ENCODE measurements at regions of chr1 and their contacts with region 1.

Region 1: DNA sequence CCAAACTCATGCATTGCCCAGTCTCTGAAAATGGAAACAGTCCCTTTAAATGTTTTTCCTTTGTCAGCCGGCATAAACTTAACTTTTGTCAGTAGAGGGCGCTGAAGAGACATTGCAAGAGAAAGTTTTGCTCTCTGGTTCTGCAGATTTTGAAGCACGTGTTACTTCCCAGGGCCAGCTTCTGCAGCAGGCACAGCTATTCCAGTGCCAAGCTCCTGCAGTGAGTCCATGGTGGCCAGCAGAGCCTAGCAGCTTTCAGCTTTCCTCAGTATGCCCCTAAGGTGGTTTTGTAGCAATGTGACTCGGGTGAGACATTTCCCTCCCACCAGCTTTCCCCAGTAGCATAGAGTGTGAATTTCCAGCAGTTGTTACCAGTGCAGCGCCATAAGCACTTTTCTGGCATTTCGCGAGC is 2.6 kb upstream of the IFI44L start:
- DNase-seq: peak; percentile 60
- ATAC-seq: peak; percentile 54
- H3K4me3 ChIP-seq: no peak overlapping the region
- H3K27ac ChIP-seq: peak overlapping the region; percentile 61; the same call in 1 of the 2 replicates
- H3K4me1 ChIP-seq: peaks cover 20% of the 10 kb centered on the region
- H3K27me3 ChIP-seq: no peaks in the 10 kb centered on the region
- CTCF ChIP-seq: peak; percentile 81 to 95 (median 87); a peak in 5 of 6 replicates
- EP300 ChIP-seq: no peak
- POLR2A ChIP-seq: no peak
- RAD21 ChIP-seq: peak; percentile 95

Region 2: GRCh38 chr1:78004719-78005447 is 612.7 kb before region 1 on chr1 and contains the start of gene DNAJB4:
- CTCF ChIA-PET with region 1: interaction called, 8 read pairs
- POLR2A ChIA-PET with region 1: interaction called, 15 read pairs
- RAD21 ChIA-PET with region 1: interaction called, 16 read pairs
- SMC1A ChIA-PET with region 1: interaction called, 14 read pairs
- in situ Hi-C with region 1: no loop called
- intact Hi-C with region 1: loop called (anchors 1 kb)
- DNase-seq: peak; percentile 96
- ATAC-seq: peak; percentile 88
- H3K4me3 ChIP-seq: peak within 1 kb of the TSS; percentile 78
- H3K27ac ChIP-seq: peak within 1 kb of the TSS; percentile 94
- H3K4me1 ChIP-seq: no peaks in the 10 kb centered on the region
- H3K27me3 ChIP-seq: no peaks in the 10 kb centered on the region
- CTCF ChIP-seq: no peak
- EP300 ChIP-seq: no peak
- POLR2A ChIP-seq: peak; percentile 72
- RAD21 ChIP-seq: no peak
- polyA plus RNA-seq, gene DNAJB4: 3.8 to 5.1 TPM

Region 3: DNA sequence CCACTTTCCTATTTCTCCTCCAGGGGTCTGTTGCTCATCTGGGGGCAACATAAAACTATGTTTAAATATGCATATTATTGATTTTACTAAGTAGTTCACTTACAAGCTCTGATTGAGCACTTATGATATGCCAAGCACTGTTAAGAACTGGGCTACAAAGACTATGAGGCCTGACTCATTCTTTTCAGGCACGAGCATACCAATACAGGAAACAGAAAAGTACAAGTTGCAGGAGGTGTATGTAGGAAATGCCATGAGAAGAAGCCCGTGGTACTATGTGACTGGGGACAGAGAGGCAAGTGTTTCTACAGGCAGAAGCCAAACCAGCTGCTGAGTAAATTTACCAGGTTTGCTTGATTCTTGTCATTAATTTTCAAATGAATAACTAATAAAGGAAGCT is 247.3 kb before region 1 on chr1:
- CTCF ChIA-PET with region 1: no interaction called
- POLR2A ChIA-PET with region 1: no interaction called
- RAD21 ChIA-PET with region 1: no interaction called
- SMC1A ChIA-PET with region 1: no interaction called
- in situ Hi-C with region 1: no loop called
- intact Hi-C with region 1: no loop called
- DNase-seq: no peak
- ATAC-seq: peak; percentile 55
- H3K4me3 ChIP-seq: no peak overlapping the region
- H3K27ac ChIP-seq: no peak overlapping the region
- H3K4me1 ChIP-seq: no peaks in the 10 kb centered on the region
- H3K27me3 ChIP-seq: no peaks in the 10 kb centered on the region; a peak in 1 of 4 replicates
- CTCF ChIP-seq: no peak
- EP300 ChIP-seq: no peak
- POLR2A ChIP-seq: no peak
- RAD21 ChIP-seq: no peak

Region 4: DNA sequence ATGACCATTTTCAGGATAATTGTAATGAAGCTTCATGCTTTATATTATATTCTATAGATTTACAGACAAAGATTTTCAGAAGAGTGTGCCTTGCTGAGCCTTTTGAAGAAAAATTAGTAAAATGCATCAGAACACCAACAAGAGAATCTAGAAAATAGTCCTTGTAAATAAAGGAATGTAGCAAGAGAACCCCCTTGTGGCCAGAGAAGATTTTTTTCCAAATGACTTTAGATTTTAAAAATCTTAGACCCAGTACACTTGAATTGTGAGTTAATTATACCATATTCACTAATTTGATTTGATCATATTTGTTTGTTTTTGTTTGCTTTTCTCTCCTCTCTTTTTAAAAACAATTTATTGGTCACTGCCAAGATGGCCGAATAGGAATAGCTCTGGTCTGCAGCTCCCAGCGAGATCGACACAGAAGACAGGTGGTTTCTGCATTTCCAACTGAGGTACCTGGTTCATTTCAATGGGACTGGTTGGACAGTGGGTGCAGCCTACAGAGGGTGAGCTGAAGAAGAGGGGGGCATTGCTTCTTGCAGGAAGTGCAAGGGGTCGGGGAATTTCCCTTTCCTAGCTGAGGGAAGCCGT is 10.2 kb before region 1 on chr1:
- CTCF ChIA-PET with region 1: interaction called, 12 read pairs
- POLR2A ChIA-PET with region 1: no interaction called
- RAD21 ChIA-PET with region 1: interaction called, 7 read pairs
- SMC1A ChIA-PET with region 1: interaction called, 5 read pairs
- in situ Hi-C with region 1: no loop called
- intact Hi-C with region 1: no loop called
- DNase-seq: no peak
- ATAC-seq: peak; percentile 61
- H3K4me3 ChIP-seq: no peak overlapping the region
- H3K27ac ChIP-seq: no peak overlapping the region
- H3K4me1 ChIP-seq: no peaks in the 10 kb centered on the region
- H3K27me3 ChIP-seq: no peaks in the 10 kb centered on the region
- CTCF ChIP-seq: peak; percentile 30 to 51 (median 31); a peak in 4 of 6 replicates
- EP300 ChIP-seq: no peak
- POLR2A ChIP-seq: no peak
- RAD21 ChIP-seq: peak; percentile 62

Region 5: GRCh38 chr1:78664763-78665162 is 47.1 kb after region 1 on chr1:
- CTCF ChIA-PET with region 1: interaction called, 127 read pairs
- POLR2A ChIA-PET with region 1: interaction called, 3 read pairs
- RAD21 ChIA-PET with region 1: interaction called, 7 read pairs
- SMC1A ChIA-PET with region 1: interaction called, 32 read pairs
- in situ Hi-C with region 1: loop called (anchors 5 kb)
- intact Hi-C with region 1: no loop called
- DNase-seq: no peak
- ATAC-seq: peak; percentile 54
- H3K4me3 ChIP-seq: no peak overlapping the region
- H3K27ac ChIP-seq: no peak overlapping the region
- H3K4me1 ChIP-seq: no peaks in the 10 kb centered on the region
- H3K27me3 ChIP-seq: no peaks in the 10 kb centered on the region
- CTCF ChIP-seq: no peak
- EP300 ChIP-seq: no peak
- POLR2A ChIP-seq: peak; percentile 17; the same call in 1 of the 2 replicates
- RAD21 ChIP-seq: no peak

Region 6: DNA sequence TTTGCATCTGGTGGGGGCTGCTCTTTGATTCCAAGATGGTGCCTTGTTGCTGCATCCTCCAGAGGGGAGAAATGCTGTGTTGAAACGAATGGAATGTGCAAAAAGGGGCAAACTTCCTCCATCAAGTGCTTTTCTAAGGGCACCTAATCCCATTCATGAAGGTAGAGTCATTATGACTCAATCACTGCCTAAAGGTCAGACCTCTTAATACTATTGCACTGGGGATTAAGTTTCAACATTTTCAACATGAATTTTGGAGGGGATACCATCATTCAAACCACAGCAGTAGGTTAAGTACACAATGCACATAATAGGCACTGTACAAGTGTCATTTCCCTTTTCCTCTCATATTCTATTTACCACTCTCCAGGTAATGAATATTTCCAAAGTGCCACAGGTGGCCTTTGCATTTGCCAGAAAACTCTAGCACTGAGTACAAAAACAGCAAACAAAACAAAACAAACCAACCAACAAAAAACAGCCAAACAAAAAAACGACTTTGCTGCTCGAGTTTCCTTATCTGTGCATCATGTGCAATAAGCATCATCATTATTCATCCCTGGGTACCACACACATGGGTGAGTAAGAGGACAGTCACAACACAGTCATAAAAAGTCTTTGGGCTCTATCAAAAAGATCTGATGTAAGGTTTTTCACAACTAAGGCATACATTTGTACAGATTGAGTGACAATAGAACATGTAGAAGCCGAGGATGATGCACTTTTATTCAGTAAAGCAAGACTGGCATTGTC is 74.5 kb after region 1 on chr1:
- CTCF ChIA-PET with region 1: no interaction called
- POLR2A ChIA-PET with region 1: no interaction called
- RAD21 ChIA-PET with region 1: no interaction called
- SMC1A ChIA-PET with region 1: no interaction called
- in situ Hi-C with region 1: no loop called
- intact Hi-C with region 1: no loop called
- DNase-seq: no peak
- ATAC-seq: no peak
- H3K4me3 ChIP-seq: no peak overlapping the region
- H3K27ac ChIP-seq: no peak overlapping the region
- H3K4me1 ChIP-seq: no peaks in the 10 kb centered on the region
- H3K27me3 ChIP-seq: no peaks in the 10 kb centered on the region
- CTCF ChIP-seq: no peak
- EP300 ChIP-seq: no peak
- POLR2A ChIP-seq: no peak
- RAD21 ChIP-seq: no peak

Region 7: GRCh38 chr1:78839704-78840277 is 222.2 kb after region 1 on chr1:
- CTCF ChIA-PET with region 1: interaction called, 11 read pairs
- POLR2A ChIA-PET with region 1: no interaction called
- RAD21 ChIA-PET with region 1: interaction called, 5 read pairs
- SMC1A ChIA-PET with region 1: interaction called, 4 read pairs
- in situ Hi-C with region 1: no loop called
- intact Hi-C with region 1: loop called (anchors 1 kb)
- DNase-seq: no peak
- ATAC-seq: peak; percentile 75
- H3K4me3 ChIP-seq: no peak overlapping the region
- H3K27ac ChIP-seq: no peak overlapping the region
- H3K4me1 ChIP-seq: no peaks in the 10 kb centered on the region
- H3K27me3 ChIP-seq: no peaks in the 10 kb centered on the region
- CTCF ChIP-seq: peak; percentile 43 to 65 (median 54)
- EP300 ChIP-seq: no peak
- POLR2A ChIP-seq: no peak
- RAD21 ChIP-seq: peak; percentile 78